CD4-positive, alpha-beta T cell (primary cell): ENCODE measurements at regions of chr17 and their contacts with region 1.

Region 1: GRCh38 chr17:44218344-44219107 is 949 bp downstream of the UBTF start:
- DNase-seq: peak; percentile 77 to 96 (median 88)
- ATAC-seq: peak; percentile 41
- H3K4me3 ChIP-seq: peak overlapping the region; percentile 71
- H3K4me3 Mint-ChIP-seq: peak overlapping the region; percentile 84
- H3K27ac ChIP-seq: peak overlapping the region; percentile 62 to 66
- H3K27ac Mint-ChIP-seq: peak overlapping the region; percentile 86
- H3K4me1 ChIP-seq: peaks cover 64% of the 10 kb centered on the region
- H3K4me1 Mint-ChIP-seq: peaks cover 58% of the 10 kb centered on the region
- H3K27me3 ChIP-seq: no peaks in the 10 kb centered on the region
- H3K27me3 Mint-ChIP-seq: no peaks in the 10 kb centered on the region
- CTCF ChIP-seq: peak; percentile 76

Region 2: DNA sequence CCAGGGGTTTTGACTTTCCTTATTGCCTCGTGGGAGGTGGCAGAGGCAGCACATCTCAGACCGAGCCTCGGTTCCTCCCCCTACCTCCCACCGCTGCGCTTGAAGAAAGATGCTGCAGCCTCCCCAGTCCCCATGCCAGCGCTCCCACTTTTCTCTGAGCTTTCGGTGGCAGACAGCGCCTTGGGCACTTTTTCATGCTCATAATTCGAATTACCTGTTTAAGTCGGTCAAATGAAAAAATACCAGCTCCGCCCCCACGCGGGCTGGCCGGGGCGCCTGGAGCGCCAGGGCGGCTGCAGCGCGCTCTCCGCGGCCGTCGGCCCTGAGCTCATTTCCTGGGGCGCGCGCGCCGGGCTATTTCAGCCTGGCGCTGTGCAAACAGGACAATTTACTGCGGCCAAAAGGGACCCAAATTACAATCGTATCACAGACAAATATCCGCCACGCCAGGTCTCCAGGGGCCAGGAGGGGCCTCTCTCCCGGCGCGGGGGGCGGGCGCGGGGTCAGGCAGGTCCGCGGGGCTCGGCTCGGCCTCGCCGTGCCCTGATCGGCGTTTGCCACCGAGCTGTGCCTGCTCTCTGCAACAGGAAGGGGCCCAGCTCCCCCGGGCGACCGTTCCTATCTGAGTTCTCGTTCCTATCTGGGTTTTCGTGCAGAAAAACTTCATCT is 504.9 kb before region 1 on chr17:
- CTCF ChIA-PET with region 1: no interaction called
- POLR2A ChIA-PET with region 1: no interaction called
- intact Hi-C with region 1: no loop called
- DNase-seq: peak in 1 of 14 experiments; percentile 18
- ATAC-seq: no peak
- H3K4me3 ChIP-seq: no peak overlapping the region
- H3K4me3 Mint-ChIP-seq: peak overlapping the region; percentile 5
- H3K27ac ChIP-seq: no peak overlapping the region
- H3K27ac Mint-ChIP-seq: no peak overlapping the region
- H3K4me1 ChIP-seq: peaks cover 9% of the 10 kb centered on the region
- H3K4me1 Mint-ChIP-seq: peaks cover 13% of the 10 kb centered on the region
- H3K27me3 ChIP-seq: peaks cover 19 to 29% of the 10 kb centered on the region in 2 experiments
- H3K27me3 Mint-ChIP-seq: peaks cover 56% of the 10 kb centered on the region
- CTCF ChIP-seq: no peak

Region 3: GRCh38 chr17:44186307-44187130 is 32.0 kb before region 1 on chr17 and contains the start of gene TMUB2:
- CTCF ChIA-PET with region 1: interaction called, 3 read pairs
- POLR2A ChIA-PET with region 1: interaction called, 92 read pairs
- intact Hi-C with region 1: no loop called
- DNase-seq: peak; percentile 99 to 100 (median 99)
- ATAC-seq: peak; percentile 92
- H3K4me3 ChIP-seq: peak within 1 kb of the TSS; percentile 90
- H3K4me3 Mint-ChIP-seq: peak within 1 kb of the TSS; percentile 98
- H3K27ac ChIP-seq: peak within 1 kb of the TSS; percentile 97 to 99
- H3K27ac Mint-ChIP-seq: peak within 1 kb of the TSS; percentile 96
- H3K4me1 ChIP-seq: peaks cover 64% of the 10 kb centered on the region
- H3K4me1 Mint-ChIP-seq: peaks cover 54% of the 10 kb centered on the region
- H3K27me3 ChIP-seq: no peaks in the 10 kb centered on the region
- H3K27me3 Mint-ChIP-seq: no peaks in the 10 kb centered on the region
- CTCF ChIP-seq: no peak
- total RNA-seq, gene TMUB2: 33.3 to 34.8 TPM

Region 4: GRCh38 chr17:44247440-44247841 is 28.9 kb after region 1 on chr17:
- CTCF ChIA-PET with region 1: no interaction called
- POLR2A ChIA-PET with region 1: interaction called, 34 read pairs
- intact Hi-C with region 1: loop called in 1 of 2 experiments (anchors 2 kb)
- DNase-seq: no peak
- ATAC-seq: no peak
- H3K4me3 ChIP-seq: no peak overlapping the region
- H3K4me3 Mint-ChIP-seq: no peak overlapping the region
- H3K27ac ChIP-seq: no peak overlapping the region
- H3K27ac Mint-ChIP-seq: peak overlapping the region; percentile 33
- H3K4me1 ChIP-seq: peaks cover 38% of the 10 kb centered on the region
- H3K4me1 Mint-ChIP-seq: peaks cover 57% of the 10 kb centered on the region
- H3K27me3 ChIP-seq: no peaks in the 10 kb centered on the region
- H3K27me3 Mint-ChIP-seq: no peaks in the 10 kb centered on the region
- CTCF ChIP-seq: no peak

Region 5: GRCh38 chr17:44314869-44315661 is 96.5 kb after region 1 on chr17:
- CTCF ChIA-PET with region 1: no interaction called
- POLR2A ChIA-PET with region 1: interaction called, 29 read pairs
- intact Hi-C with region 1: no loop called
- DNase-seq: peak in 5 of 14 experiments; percentile 28 to 62 (median 38)
- ATAC-seq: peak; percentile 70
- H3K4me3 ChIP-seq: peak overlapping the region; percentile 43
- H3K4me3 Mint-ChIP-seq: no peak overlapping the region
- H3K27ac ChIP-seq: no peak overlapping the region
- H3K27ac Mint-ChIP-seq: no peak overlapping the region
- H3K4me1 ChIP-seq: peaks cover 20% of the 10 kb centered on the region
- H3K4me1 Mint-ChIP-seq: peaks cover 21% of the 10 kb centered on the region
- H3K27me3 ChIP-seq: peaks cover 28 to 30% of the 10 kb centered on the region in 2 experiments
- H3K27me3 Mint-ChIP-seq: peaks cover 55% of the 10 kb centered on the region
- CTCF ChIP-seq: no peak

Region 6: DNA sequence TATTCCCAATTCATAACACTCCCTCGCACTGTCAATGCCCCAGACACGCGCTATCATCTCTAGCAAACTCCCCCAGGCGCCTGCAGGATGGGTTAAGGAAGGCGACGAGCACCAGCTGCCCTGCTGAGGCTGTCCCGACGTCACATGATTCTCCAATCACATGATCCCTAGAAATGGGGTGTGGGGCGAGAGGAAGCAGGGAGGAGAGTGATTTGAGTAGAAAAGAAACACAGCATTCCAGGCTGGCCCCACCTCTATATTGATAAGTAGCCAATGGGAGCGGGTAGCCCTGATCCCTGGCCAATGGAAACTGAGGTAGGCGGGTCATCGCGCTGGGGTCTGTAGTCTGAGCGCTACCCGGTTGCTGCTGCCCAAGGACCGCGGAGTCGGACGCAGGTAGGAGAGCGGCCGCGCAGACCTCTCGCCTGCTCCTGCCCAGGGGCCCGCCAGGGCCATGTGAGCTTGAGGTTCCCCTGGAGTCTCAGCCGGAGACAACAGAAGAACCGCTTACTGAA is 126.5 kb after region 1 on chr17 and contains the start of gene GRN:
- CTCF ChIA-PET with region 1: interaction called, 9 read pairs
- POLR2A ChIA-PET with region 1: interaction called, 13 read pairs
- intact Hi-C with region 1: no loop called
- DNase-seq: peak; percentile 71 to 91 (median 78)
- ATAC-seq: peak; percentile 99
- H3K4me3 ChIP-seq: peak within 1 kb of the TSS; percentile 88
- H3K4me3 Mint-ChIP-seq: peak within 1 kb of the TSS; percentile 95
- H3K27ac ChIP-seq: peak within 1 kb of the TSS; percentile 13 to 57
- H3K27ac Mint-ChIP-seq: peak within 1 kb of the TSS; percentile 69
- H3K4me1 ChIP-seq: peaks cover 29% of the 10 kb centered on the region
- H3K4me1 Mint-ChIP-seq: peaks cover 19% of the 10 kb centered on the region
- H3K27me3 ChIP-seq: no peaks in the 10 kb centered on the region
- H3K27me3 Mint-ChIP-seq: peaks cover 5% of the 10 kb centered on the region
- CTCF ChIP-seq: no peak
- total RNA-seq, gene GRN: 15.3 to 16.1 TPM